ENCODE measurements at regions of chr1 and their contacts with region 1.

Region 1: GRCh38 chr1:150561974-150562445 is 12.8 kb downstream of the ADAMTSL4 start:
- DNase-seq: peak; percentile 57
- H3K4me3 ChIP-seq: peak overlapping the region; percentile 60
- CTCF ChIP-seq: no peak

Region 2: DNA sequence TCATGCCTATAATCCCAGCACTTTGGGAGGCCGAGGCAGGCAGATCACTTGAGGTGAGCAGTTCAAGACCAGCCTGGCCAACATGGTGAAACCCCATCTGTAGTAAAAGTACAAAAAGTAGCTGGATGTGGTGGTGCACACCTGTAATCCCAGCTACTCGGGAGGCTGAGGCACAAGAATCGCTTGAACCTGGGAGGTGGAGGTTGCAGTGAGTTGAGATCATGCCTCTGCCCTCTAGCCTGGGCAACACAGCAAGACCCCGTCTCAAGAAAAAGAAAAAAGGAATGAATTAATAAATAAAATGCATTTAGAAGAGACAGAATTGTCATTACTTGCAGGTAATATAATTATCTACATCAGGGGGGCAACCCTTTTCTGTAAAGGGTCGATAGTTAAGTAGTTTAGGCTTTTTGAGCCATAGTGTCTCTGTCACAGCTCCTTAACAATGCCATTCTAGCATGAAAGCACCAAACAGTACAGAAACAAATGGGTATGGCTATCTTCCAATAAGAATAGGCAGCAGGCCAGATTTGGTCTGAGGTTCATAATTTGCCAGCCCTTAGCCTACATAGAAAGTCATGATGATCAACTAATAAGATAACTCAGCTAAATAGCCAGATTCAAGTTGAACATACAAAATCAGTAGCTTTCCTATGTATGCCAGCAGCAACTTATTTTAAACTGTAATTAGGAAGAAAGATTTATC is 141.3 kb before region 1 on chr1:
- CTCF ChIA-PET with region 1: no interaction called
- POLR2A ChIA-PET with region 1: no interaction called
- DNase-seq: no peak
- H3K4me3 ChIP-seq: no peak overlapping the region
- CTCF ChIP-seq: no peak

Region 3: DNA sequence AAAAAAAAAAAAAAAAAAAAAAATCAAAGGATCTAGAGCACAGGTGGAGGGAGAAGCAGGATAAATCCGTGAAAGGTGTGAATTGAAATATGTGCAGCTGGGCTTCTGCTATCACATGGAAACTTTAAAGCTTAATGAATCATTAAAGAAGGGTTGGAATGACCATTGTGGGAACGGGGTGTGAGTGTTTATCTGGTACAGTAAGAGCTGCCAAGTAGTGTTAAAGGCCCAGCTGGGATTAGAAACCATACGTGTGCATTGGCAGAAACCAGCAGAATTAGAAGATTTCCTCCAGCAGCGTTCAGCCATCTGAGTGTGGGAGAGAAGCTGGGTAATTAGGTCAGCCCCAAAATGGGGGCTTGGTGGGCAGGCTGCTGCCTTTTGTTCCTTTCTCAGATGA is 33.0 kb before region 1 on chr1:
- CTCF ChIA-PET with region 1: interaction called, 37 read pairs
- POLR2A ChIA-PET with region 1: no interaction called
- DNase-seq: no peak
- H3K4me3 ChIP-seq: no peak overlapping the region
- CTCF ChIP-seq: no peak

Region 4: DNA sequence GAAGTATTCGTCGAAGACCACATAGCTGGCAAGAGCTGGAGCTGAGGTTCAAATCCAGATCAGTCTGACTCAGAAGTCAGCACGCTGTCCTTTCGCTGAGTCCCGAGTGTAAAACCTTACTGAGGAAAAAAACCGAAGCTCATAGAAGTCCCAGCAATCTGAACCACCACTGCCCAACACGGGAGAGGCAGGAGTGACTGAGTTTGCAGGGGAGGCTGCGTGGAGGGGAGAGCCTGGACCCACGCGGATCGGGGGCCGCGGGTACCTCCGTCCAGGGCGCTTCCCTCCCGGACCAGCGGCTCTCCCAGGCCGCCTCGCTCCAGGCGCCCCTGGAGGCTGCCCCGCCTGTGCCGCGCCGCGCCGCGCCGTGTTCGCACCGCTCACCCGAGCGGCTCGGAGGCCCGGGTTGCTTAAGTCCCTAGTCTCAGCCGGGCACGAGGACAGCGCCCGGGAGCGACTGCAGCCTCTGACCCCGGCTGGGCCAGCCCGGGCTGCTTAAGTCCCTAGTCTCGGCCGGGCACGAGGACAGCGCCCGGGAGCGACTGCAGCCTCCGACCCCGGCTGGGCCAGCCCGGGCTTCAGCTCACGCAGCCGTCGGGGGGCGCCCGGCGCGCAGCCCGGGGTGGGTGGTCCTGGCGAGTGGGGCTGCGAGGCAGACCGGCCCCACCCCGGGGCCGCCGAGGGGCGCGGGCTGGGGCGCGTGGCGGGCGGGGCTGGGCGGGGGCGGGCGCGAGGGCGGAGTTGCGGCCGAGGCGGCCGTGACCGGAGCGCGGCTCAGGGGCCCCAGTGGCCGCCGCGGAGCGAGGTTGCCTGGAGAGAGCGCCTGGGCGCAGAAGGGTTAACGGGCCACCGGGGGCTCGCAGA is 13.1 kb before region 1 on chr1 and contains the start of gene ADAMTSL4:
- CTCF ChIA-PET with region 1: interaction called, 120 read pairs
- POLR2A ChIA-PET with region 1: interaction called, 8 read pairs
- DNase-seq: no peak
- H3K4me3 ChIP-seq: peak within 1 kb of the TSS; percentile 60
- CTCF ChIP-seq: no peak

Region 5: DNA sequence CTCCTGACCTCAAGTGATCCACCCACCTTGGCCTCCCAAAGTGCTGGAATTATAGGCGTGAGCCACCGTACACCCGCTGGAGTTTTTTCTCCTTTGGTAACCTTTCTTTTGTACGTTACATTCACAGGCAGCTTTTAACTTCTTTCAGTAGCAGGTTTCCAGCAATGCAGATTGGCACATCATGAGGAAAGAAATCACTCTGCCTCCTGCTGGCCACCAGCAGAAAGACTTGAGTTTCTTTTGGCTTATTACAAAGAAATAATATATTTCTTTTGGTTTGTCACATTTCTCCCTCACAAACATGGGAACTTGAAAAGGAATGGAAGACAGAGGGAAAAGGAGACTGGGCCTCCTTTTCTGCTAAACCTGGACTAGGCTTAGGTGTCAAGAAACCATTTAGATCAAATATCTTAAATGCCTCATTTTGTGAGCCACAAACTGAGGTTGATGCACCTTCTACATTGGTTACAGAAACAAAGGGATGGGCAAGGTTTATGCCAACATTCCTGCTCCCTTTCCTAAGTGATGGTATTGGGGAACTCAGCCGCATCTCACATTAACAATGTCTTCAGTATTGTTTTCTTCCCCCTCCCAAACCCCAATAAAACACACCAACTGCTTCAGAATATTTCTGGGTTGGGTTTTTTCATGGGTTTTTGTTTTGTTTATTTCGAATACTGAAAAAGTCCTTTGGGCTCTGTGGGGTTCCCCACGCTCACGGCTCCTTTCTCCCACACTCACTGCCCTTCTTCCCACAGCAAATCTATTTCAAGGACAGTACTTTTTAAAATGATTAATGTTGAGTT is 59.7 kb after region 1 on chr1:
- CTCF ChIA-PET with region 1: interaction called, 315 read pairs
- POLR2A ChIA-PET with region 1: interaction called, 10 read pairs
- DNase-seq: no peak
- H3K4me3 ChIP-seq: no peak overlapping the region
- CTCF ChIP-seq: peak; percentile 63

Region 6: DNA sequence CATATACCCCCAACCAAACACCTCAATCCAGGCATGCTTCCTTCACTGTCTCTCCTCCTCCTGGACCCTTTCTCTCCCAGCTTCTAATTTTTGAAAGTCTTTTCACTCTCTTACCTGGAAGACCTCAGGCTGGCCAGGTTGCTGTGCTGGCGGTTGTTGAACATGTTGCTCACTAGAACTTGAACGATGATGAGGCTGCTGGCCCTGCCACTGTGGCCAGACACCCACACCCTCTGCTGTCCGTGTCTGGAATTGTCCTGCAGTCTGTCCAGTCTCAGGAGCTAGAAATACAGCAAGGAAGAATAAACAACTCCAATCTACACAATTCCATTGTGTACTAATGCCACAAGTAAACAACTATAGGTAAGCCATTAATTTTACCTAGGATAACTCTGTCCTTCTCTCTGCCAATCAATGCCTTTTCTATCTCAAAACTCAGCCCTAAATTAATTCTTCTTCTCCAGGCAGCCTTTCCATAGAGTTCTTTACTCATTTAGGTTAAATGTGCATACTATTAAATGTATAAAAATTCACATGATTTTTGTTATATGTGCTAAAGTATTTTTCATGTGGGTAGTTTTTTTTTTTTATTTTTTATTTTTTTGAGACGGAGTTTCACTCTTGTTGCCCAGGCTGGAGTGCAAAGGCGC is 251.2 kb after region 1 on chr1:
- CTCF ChIA-PET with region 1: interaction called, 37 read pairs
- POLR2A ChIA-PET with region 1: no interaction called
- DNase-seq: no peak
- H3K4me3 ChIP-seq: no peak overlapping the region
- CTCF ChIP-seq: peak; percentile 83

Measured in AG04449 (cell line).